ENCODE measurements at regions of chr5 and their contacts with region 1.

Region 1: DNA sequence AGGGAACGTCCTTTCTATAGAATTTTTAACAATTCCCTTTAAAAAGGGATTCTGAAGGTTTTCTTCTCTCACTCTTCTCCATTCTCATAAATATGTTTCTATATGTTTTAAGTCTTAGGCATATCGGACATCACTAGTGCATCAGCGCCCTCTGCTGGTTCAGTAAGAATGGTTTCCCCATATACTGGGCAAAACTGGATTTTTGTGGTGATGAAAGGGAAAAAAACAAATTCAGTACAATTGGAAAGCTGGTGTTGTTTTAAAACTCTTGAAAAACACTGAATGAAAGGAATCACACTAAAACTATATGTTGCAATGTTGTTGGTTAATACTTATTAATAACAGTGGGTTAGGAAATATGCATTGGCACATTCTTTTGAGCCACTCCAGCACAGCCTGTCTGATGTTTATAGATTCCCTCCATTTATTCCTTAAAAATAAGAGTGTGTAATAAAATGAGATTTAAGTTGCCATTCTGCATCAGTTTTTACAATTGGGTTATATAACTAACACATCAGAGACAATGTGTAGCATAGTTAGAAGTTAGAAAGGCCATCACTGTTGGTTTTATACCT is 15.8 kb downstream of the CWC27 start:
- DNase-seq: peak; percentile 25 to 90 (median 62)
- ATAC-seq: peak; percentile 48 to 74 (median 73)
- H3K4me3 ChIP-seq: no peak overlapping the region
- H3K4me3 Mint-ChIP-seq: no peak overlapping the region
- H3K27ac ChIP-seq: no peak overlapping the region
- H3K27ac Mint-ChIP-seq: no peak overlapping the region
- H3K4me1 ChIP-seq: no peaks in the 10 kb centered on the region
- H3K4me1 Mint-ChIP-seq: peaks cover 6 to 9% (median 7%) of the 10 kb centered on the region in 3 donors
- H3K27me3 ChIP-seq: no peaks in the 10 kb centered on the region
- H3K27me3 Mint-ChIP-seq: no peaks in the 10 kb centered on the region

Region 2: GRCh38 chr5:64634997-64635686 is 149.4 kb before region 1 on chr5:
- CTCF ChIA-PET with region 1: interaction called, 9 to 32 read pairs
- POLR2A ChIA-PET with region 1: no interaction called
- DNase-seq: peak in 1 of 35 experiments; percentile 63
- ATAC-seq: no peak
- H3K4me3 ChIP-seq: no peak overlapping the region
- H3K4me3 Mint-ChIP-seq: no peak overlapping the region
- H3K27ac ChIP-seq: no peak overlapping the region
- H3K27ac Mint-ChIP-seq: no peak overlapping the region
- H3K4me1 ChIP-seq: no peaks in the 10 kb centered on the region
- H3K4me1 Mint-ChIP-seq: peaks cover 0 to 2% (median 0%) of the 10 kb centered on the region in 3 donors
- H3K27me3 ChIP-seq: peaks cover 0 to 11% of the 10 kb centered on the region in 2 experiments
- H3K27me3 Mint-ChIP-seq: peaks cover 13 to 17% of the 10 kb centered on the region in 2 donors

Region 3: GRCh38 chr5:64749385-64749784 is 35.2 kb before region 1 on chr5:
- CTCF ChIA-PET with region 1: no interaction called
- POLR2A ChIA-PET with region 1: no interaction called
- DNase-seq: no peak
- ATAC-seq: no peak
- H3K4me3 ChIP-seq: no peak overlapping the region
- H3K4me3 Mint-ChIP-seq: no peak overlapping the region
- H3K27ac ChIP-seq: no peak overlapping the region
- H3K27ac Mint-ChIP-seq: no peak overlapping the region
- H3K4me1 ChIP-seq: no peaks in the 10 kb centered on the region
- H3K4me1 Mint-ChIP-seq: peaks cover 0 to 2% (median 2%) of the 10 kb centered on the region in 3 donors
- H3K27me3 ChIP-seq: no peaks in the 10 kb centered on the region
- H3K27me3 Mint-ChIP-seq: no peaks in the 10 kb centered on the region

Region 4: GRCh38 chr5:64768358-64769312 is 15.9 kb before region 1 on chr5 and contains the starts of genes CWC27 and SREK1IP1:
- CTCF ChIA-PET with region 1: interaction called, 10 to 13 read pairs
- POLR2A ChIA-PET with region 1: no interaction called
- DNase-seq: peak; percentile 66 to 90 (median 76)
- ATAC-seq: peak; percentile 93 to 97 (median 97)
- H3K4me3 ChIP-seq: peak within 1 kb of the TSS; percentile 96 to 100
- H3K4me3 Mint-ChIP-seq: peak within 1 kb of the TSS; percentile 98 to 100 (median 99)
- H3K27ac ChIP-seq: peak within 1 kb of the TSS; percentile 84
- H3K27ac Mint-ChIP-seq: peak within 1 kb of the TSS; percentile 96 to 99
- H3K4me1 ChIP-seq: peaks cover 24 to 31% of the 10 kb centered on the region in 2 experiments
- H3K4me1 Mint-ChIP-seq: peaks cover 62 to 73% (median 68%) of the 10 kb centered on the region in 3 donors
- H3K27me3 ChIP-seq: no peaks in the 10 kb centered on the region
- H3K27me3 Mint-ChIP-seq: no peaks in the 10 kb centered on the region
- total RNA-seq, gene CWC27: 15.5 to 32.3 (median 18.8) TPM
- total RNA-seq, gene SREK1IP1: 16.2 to 26.4 (median 22.7) TPM

Measured in T-cell (primary cell).